ENCODE measurements at regions of chr18 and their contacts with region 1.

Region 1: DNA sequence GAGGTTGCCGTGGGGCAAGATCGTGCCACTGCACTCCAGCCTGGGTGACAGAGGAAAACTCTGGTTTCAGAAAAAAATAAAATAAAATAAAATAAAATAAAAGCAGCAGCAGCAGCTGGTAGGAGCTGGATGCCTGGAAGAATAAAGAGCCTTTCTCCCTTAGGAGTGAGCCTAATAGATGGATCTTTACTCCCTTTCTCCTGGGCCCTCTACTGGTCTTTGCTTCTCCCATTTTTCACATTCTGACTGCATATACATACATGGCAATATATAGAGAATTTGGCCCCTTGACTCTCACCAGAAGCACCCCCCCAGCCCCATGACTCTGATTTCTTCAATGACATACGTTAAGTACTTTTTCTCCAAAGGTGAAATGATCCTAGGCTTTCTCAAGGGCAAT is 9.8 kb upstream of the MALT1 start:
- DNase-seq: no peak
- H3K4me3 ChIP-seq: no peak overlapping the region
- H3K4me3 Mint-ChIP-seq: no peak overlapping the region
- H3K27ac ChIP-seq: no peak overlapping the region
- H3K27ac Mint-ChIP-seq: no peak overlapping the region
- H3K4me1 ChIP-seq: peaks cover 37% of the 10 kb centered on the region
- H3K4me1 Mint-ChIP-seq: peaks cover 41 to 55% (median 47%) of the 10 kb centered on the region in 3 donors
- H3K27me3 ChIP-seq: no peaks in the 10 kb centered on the region
- H3K27me3 Mint-ChIP-seq: peaks cover 0 to 2% of the 10 kb centered on the region in 2 donors

Region 2: DNA sequence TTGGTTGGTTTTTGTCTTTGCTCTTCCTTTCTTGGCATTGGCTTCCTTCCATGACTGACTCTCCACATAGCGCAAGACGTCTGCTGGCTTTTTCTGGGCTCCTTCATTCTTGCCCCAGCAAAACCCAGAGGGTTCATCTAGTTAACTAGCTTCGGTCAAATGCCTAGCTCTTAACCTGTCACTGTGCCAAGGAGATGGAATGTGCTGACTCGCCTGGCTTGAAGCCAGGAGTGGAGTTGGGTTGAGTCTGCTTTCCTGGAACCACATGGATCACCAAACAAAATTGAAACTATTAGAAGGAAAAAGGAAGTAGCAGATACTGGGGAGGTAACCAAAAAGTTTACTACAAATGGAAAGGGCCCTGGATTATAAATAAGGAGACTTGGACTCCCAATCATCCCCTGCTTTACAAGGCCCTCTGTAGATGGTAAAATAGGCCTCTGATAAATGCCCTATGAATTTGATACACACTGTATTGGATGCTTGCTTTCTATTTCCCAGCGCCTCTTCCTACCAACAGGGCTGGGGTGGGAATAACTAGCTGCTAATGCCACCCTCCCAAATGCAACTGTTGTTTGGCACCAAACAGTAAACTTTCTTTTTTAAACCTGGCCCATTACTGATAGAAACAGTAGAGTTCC is 21.1 kb after region 1 on chr18:
- CTCF ChIA-PET with region 1: no interaction called
- POLR2A ChIA-PET with region 1: interaction called, 10 read pairs
- DNase-seq: no peak
- H3K4me3 ChIP-seq: no peak overlapping the region
- H3K4me3 Mint-ChIP-seq: no peak overlapping the region
- H3K27ac ChIP-seq: no peak overlapping the region
- H3K27ac Mint-ChIP-seq: peak overlapping the region in 7 of 8 donors; percentile 3 to 80 (median 44)
- H3K4me1 ChIP-seq: peaks cover 35% of the 10 kb centered on the region
- H3K4me1 Mint-ChIP-seq: peaks cover 61 to 87% (median 81%) of the 10 kb centered on the region in 3 donors
- H3K27me3 ChIP-seq: no peaks in the 10 kb centered on the region
- H3K27me3 Mint-ChIP-seq: peaks cover 0 to 3% of the 10 kb centered on the region in 2 donors

Measured in CD8-positive, alpha-beta memory T cell (primary cell).